MCF 10A (cell line): ENCODE measurements at regions of chrX and their contacts with region 1.

Region 1: GRCh38 chrX:110146521-110146920 is 143.6 kb downstream of the TMEM164 start:
- DNase-seq: peak; percentile 79
- H3K4me3 Mint-ChIP-seq: no peak overlapping the region
- H3K27ac Mint-ChIP-seq: no peak overlapping the region
- H3K4me1 Mint-ChIP-seq: peaks cover 11% of the 10 kb centered on the region
- H3K27me3 Mint-ChIP-seq: peaks cover 46% of the 10 kb centered on the region
- CTCF ChIP-seq: peak; percentile 51

Region 2: DNA sequence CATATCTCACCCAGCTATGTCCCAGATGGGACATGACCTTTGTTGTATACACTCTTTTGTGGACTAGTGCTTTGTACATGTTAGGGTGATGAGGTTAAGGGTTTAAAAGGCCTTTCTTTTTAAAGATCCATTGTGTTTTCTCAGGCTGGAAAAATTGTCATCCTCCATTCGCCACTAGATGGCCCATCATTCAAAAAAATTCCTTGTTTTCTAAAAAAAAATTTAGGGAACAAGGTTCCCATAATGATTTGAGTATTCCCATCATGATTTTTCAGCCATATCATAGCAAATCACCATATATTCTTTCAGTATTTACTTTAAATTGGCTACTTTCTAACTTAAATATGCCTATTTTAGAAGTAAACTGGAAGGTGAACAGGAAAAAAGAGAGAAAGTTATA is 235.5 kb before region 1 on chrX:
- CTCF ChIA-PET with region 1: interaction called, 61 read pairs
- POLR2A ChIA-PET with region 1: interaction called, 4 read pairs
- intact Hi-C with region 1: loop called (anchors 1 kb)
- DNase-seq: peak; percentile 20
- H3K4me3 Mint-ChIP-seq: no peak overlapping the region
- H3K27ac Mint-ChIP-seq: no peak overlapping the region
- H3K4me1 Mint-ChIP-seq: no peaks in the 10 kb centered on the region
- H3K27me3 Mint-ChIP-seq: peaks cover 50% of the 10 kb centered on the region
- CTCF ChIP-seq: peak; percentile 45

Region 3: DNA sequence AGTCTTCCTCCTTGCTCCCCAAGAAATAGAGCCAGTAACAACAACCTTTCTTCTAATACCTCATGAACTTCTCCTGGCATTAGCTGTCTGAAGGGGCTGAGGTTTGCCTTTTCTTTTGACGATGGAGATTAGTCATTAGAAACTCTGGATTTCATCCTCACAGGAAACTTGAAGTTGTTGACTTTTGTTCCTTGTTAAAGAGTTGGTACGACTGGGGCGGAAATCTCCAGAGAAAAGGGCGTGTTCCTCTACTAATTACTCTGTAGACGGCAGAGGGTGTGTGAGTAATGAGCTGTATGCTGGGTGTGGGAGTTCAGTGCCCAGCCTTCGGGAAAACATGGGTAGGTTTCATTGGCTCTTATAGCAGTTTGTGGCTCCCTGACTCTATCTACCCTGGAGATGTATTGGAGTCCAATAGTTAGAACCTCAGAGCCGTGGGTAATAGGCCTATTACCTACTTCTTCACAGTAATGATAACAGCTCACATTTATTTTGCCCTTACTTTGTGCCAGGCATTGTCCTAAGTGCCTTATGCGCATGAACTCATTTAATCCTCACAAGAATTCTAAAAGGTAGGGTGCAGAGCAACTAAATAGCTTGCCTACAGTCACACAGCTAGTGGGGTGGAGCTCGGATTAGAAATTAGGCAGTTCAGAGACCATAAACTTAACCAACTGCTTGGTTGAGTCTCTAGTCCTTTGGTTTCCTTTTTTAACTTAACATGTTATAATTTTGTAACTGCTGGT is 120.2 kb before region 1 on chrX:
- CTCF ChIA-PET with region 1: interaction called, 22 read pairs
- POLR2A ChIA-PET with region 1: interaction called, 9 read pairs
- intact Hi-C with region 1: loop called (anchors 2 kb)
- DNase-seq: peak; percentile 75
- H3K4me3 Mint-ChIP-seq: peak overlapping the region; percentile 1
- H3K27ac Mint-ChIP-seq: peak overlapping the region; percentile 81
- H3K4me1 Mint-ChIP-seq: peaks cover 9% of the 10 kb centered on the region
- H3K27me3 Mint-ChIP-seq: peaks cover 24% of the 10 kb centered on the region
- CTCF ChIP-seq: no peak

Region 4: DNA sequence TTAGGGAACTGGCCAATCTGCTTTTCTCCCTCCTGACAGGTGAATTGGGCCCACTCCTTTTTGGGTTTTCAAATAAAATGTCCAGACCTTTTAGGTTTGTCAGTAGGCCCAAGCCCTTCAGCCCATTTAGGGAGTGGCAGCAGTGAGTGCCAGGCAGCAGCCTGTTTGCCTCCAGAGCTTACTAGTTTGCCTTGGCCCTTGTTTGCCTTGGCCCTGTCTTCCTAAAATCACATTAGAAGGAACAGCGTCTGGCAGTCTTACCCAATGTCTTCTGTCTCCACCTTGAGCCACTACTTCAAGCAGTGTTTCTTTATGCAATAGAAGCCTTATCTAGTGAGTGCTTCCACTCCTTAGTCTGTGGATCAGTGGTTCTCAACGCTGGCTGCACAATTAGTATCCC is 26.5 kb before region 1 on chrX:
- CTCF ChIA-PET with region 1: interaction called, 19 read pairs
- POLR2A ChIA-PET with region 1: interaction called, 3 read pairs
- intact Hi-C with region 1: no loop called
- DNase-seq: peak; percentile 35
- H3K4me3 Mint-ChIP-seq: no peak overlapping the region
- H3K27ac Mint-ChIP-seq: no peak overlapping the region
- H3K4me1 Mint-ChIP-seq: peaks cover 5% of the 10 kb centered on the region
- H3K27me3 Mint-ChIP-seq: peaks cover 57% of the 10 kb centered on the region
- CTCF ChIP-seq: no peak